Thyroid gland (tissue), 4 donors: ENCODE measurements at regions of chr14 and their contacts with region 1.

Region 1: DNA sequence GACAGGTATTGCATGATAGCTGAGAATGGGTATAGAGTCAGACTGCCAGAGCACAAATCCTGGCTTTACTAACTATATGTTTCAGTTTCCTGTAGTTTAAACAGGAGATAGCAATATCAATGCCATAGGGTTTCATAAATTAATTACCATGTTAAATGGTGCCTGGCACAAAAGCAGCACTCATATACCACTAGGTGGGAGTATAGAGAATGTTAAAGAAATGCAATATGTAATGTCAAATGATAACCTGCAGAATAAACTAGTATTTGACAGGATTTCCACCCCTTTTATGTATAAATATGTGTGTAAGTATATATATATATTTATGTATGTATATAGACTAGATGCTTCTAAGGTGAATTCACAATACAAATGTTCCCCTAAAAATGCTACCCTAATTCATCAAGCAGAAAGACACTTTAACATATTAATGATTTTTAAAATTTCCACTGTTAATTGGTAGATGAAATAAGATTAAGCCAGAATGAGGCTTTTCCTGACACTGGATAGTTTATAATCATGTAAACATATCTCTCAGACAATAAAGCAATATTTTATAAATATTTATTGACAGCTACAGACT is 8.6 kb downstream of the WDR89 start:
- DNase-seq: no peak
- H3K4me3 ChIP-seq: no peak overlapping the region
- H3K27ac ChIP-seq: no peak overlapping the region
- H3K4me1 ChIP-seq: no peaks in the 10 kb centered on the region
- H3K27me3 ChIP-seq: no peaks in the 10 kb centered on the region
- CTCF ChIP-seq: peak in 3 of 6 experiments; percentile 12 to 43 (median 19)
- POLR2A ChIP-seq: no peak

Region 2: GRCh38 chr14:63470962-63471793 is 161.8 kb before region 1 on chr14:
- intact Hi-C with region 1: no loop called
- DNase-seq: no peak
- H3K4me3 ChIP-seq: no peak overlapping the region
- H3K27ac ChIP-seq: no peak overlapping the region
- H3K4me1 ChIP-seq: peaks cover 6 to 31% of the 10 kb centered on the region in 2 donors
- H3K27me3 ChIP-seq: no peaks in the 10 kb centered on the region
- CTCF ChIP-seq: no peak
- POLR2A ChIP-seq: no peak

Region 3: DNA sequence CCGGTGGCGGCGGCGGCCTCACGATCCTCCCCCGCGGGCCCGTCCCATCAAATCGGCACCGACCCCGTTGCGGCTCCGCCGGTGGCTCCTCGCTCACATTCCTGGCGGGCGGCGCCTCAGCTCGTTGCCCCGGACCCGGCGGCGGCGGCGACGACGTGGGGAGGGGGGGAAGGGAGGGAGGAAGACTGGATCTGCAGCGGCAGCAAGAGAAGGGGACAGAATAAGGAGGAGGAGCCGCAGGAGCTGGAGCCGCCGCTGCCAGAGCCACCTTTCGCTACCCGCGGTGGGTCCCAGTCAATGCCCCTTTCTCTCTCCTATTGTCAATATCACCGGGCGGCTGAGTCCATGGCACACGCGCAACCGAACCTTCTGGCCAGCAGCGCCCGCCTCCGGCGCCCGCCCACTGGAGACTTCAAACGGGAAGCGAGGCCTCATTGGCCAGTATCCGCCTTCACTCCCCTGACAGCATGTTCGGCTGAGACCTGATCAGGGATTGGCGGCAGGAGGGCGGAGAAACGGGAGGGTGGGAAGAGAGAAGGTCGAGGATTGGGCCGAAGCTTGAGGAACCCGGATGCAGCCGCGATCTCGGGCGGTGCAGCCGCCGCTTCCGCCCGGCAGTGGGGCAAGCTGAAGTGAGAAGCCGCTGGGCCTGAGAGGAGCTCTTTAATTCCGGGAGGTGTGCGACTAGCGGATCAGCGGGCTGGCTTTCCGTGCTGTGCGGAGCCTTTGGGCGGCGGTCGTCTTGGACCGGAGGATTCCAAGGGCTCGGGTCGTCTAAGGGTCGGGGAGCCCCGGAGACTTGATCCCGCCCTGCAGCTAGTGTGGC is 89.8 kb before region 1 on chr14 and contains the start of gene PPP2R5E:
- intact Hi-C with region 1: loop called (anchors 10 kb)
- DNase-seq: peak; percentile 99
- H3K4me3 ChIP-seq: peak within 1 kb of the TSS; percentile 58 to 99 (median 95)
- H3K27ac ChIP-seq: peak within 1 kb of the TSS; percentile 48 to 96 (median 88)
- H3K4me1 ChIP-seq: peaks cover 15 to 17% of the 10 kb centered on the region in 2 donors
- H3K27me3 ChIP-seq: no peaks in the 10 kb centered on the region
- CTCF ChIP-seq: no peak
- POLR2A ChIP-seq: peak in 1 of 2 donors; percentile 86
- total RNA-seq, gene PPP2R5E: 30.0 to 42.3 (median 36.0) TPM

Region 4: GRCh38 chr14:63555572-63555971 is 77.5 kb before region 1 on chr14:
- intact Hi-C with region 1: no loop called
- DNase-seq: no peak
- H3K4me3 ChIP-seq: no peak overlapping the region
- H3K27ac ChIP-seq: no peak overlapping the region
- H3K4me1 ChIP-seq: no peaks in the 10 kb centered on the region
- H3K27me3 ChIP-seq: no peaks in the 10 kb centered on the region
- CTCF ChIP-seq: no peak
- POLR2A ChIP-seq: no peak

Region 5: DNA sequence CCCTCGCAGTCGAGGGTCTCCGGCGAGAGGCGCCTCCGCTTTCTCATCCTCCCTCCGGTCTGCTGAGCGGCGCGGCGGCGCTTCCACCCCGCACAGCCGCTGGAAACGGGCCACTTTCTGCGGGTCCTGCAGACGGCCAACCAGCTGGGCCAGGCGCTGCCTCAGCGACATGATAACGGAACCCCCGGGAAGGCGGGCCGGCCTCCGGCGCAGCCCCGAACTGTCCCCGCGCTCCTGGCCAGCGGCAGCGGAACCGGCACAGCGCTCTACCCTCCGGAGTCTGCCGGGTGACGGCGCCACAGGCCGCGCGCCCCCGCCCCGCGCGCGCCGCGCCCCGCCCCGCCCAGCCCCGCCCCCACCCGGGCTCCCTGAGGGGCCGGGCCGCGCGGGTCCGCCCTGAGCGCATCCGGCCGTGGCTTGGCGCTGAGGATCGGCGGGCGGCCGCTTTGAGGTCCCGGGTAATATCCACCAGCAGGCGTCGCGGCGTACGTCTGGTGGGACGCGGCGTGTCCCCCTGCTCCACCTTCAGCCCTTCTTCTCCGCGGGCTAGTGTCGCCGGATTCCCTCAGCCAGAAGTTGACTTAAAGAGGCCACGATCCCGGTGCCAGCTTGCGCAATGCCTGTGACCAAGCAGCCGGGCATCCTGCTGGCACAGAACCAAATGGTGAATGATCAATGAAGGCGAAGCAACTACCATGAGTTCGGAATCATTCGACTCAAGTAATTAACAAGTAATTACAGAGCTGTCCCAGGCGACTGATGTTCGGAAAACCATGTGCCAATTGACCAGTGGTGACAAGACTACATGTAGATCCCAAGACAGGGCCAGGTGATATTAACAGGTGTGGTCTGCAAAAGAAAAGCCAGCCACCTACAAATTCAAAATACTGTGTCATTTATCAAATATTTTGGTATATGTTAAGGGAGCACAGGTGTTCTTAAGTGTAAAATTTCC is 95.0 kb after region 1 on chr14 and contains the start of gene SGPP1:
- intact Hi-C with region 1: loop called (anchors 10 kb)
- DNase-seq: peak; percentile 79 to 84
- H3K4me3 ChIP-seq: peak within 1 kb of the TSS; percentile 85 to 92 (median 87)
- H3K27ac ChIP-seq: peak within 1 kb of the TSS; percentile 78 to 94 (median 93)
- H3K4me1 ChIP-seq: peaks cover 16 to 19% of the 10 kb centered on the region in 2 donors
- H3K27me3 ChIP-seq: no peaks in the 10 kb centered on the region
- CTCF ChIP-seq: peak in 4 of 6 experiments; percentile 20 to 29 (median 24)
- POLR2A ChIP-seq: peak in 1 of 2 donors; percentile 80
- total RNA-seq, gene SGPP1: 19.2 to 38.1 (median 25.7) TPM